ENCODE measurements at regions of chr1 and their contacts with region 1.

Region 1: DNA sequence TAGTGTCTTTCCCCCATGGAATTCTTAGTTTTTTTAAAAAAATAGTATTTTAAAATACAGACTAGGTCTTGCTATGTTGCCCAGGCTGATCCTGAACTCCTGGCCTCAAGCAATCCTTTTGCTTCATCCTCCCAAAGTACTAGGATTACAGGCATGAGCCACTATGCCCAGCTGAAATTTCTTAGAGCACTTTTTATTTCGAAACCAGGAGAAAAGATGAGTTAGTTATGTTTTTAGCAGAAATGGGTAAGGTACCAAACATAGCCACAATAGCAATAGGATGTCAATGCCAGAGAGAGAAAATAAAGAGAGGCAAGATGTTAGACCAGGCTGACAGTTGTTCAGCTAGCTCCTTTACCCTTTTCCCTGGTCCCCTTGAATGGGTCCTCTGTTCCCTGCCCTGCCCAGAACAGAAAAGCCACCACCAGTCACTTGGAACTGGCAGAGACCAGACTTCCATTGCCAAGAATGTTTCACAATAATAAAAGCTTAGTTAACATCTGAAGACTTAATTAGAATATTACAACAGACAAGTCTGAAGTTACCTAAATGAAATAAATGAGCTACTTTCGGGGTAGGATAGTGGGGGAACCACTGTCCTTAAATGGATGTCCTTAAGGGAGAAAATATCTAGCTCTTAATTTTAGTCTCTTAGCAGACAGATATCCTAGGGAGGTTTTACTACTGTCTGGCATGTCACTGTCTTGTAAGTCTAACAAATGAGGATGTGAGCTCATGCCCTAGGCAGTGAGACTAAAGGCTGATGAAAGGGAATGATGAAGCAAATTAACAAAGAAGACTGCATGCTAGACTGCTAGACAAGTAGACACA is 54.3 kb downstream of the ABL2 start:
- DNase-seq: no peak
- H3K4me3 ChIP-seq: no peak overlapping the region
- H3K27ac ChIP-seq: peak overlapping the region; percentile 48 to 57
- H3K4me1 ChIP-seq: peaks cover 8 to 38% of the 10 kb centered on the region in 2 donors
- H3K27me3 ChIP-seq: no peaks in the 10 kb centered on the region
- CTCF ChIP-seq: no peak

Region 2: DNA sequence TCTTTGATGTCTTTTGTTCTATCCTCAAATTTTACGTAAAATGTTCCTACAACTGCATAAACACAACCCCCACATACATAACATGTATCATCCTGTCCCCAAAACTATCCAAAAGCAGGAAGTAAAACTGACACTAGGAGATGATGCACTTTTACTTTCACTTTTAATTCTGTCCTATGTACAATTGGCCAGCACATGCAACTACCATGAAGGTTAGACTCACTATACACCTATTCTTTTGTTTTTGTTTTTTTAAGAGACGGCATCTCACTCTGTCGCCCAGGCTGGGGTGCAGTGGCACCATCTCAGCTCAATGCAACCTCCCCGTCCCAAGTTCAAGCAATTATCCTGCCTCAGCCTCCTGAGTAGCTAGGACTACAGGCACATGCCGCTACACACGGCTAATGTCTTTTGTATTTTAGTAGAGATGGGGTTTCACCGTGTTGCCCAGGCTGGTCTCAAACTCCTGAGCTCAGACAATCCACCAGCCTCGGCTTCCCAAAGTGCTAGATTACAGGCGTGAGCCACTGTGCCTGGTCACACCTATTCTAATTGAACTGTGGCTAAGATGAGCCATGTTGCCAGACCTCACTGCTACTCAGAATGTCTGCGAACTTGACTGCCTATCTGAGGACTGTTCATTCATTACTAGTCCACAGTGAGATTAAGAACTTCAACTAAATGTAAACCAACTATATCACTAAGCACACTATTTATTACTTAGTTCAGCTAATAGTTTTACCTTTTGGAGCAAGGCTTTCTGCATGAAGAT is 45.3 kb before region 1 on chr1:
- intact Hi-C with region 1: loop called (anchors 5 kb)
- DNase-seq: no peak
- H3K4me3 ChIP-seq: peak overlapping the region; percentile 25 to 43
- H3K27ac ChIP-seq: peak overlapping the region; percentile 4 to 49
- H3K4me1 ChIP-seq: peaks cover 0 to 24% of the 10 kb centered on the region in 2 donors
- H3K27me3 ChIP-seq: no peaks in the 10 kb centered on the region
- CTCF ChIP-seq: no peak

Region 3: GRCh38 chr1:179142889-179143299 is 32.3 kb before region 1 on chr1:
- intact Hi-C with region 1: loop called (anchors 5 kb)
- DNase-seq: no peak
- H3K4me3 ChIP-seq: peak overlapping the region; percentile 22 to 52
- H3K27ac ChIP-seq: peak overlapping the region; percentile 56 to 77
- H3K4me1 ChIP-seq: peaks cover 2 to 7% of the 10 kb centered on the region in 2 donors
- H3K27me3 ChIP-seq: no peaks in the 10 kb centered on the region
- CTCF ChIP-seq: no peak

Measured in ascending aorta (tissue), 2 donors.